Right ventricle myocardium superior (tissue), 1 donor: ENCODE measurements at regions of chr17 and their contacts with region 1.

Region 1: DNA sequence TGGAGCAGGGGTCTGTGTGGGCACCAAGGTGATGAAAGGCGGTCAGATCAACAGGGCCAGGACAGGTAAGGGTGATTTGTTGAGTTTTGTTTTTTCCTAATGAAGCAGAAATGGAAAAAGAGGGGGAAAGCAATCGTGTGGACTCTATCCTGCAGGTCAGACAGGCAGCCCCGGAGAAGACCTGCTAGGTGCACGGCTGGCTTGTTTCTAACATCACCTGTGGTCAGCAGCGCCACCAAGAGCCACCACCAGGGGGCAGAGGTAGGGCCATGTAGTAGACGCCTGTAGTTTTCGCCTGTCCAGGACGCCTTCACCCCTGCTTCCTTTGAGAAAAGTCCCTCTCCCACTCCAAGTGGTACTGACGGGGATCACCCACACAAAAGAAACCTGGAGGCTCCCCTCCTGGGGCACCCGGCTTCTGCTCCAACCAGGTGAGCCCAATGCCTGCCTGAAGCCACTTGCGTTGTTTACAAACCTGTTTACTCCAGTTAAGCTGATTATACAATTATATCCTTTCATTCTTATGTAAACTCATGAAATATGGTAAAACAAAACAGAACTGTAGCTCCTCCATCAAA is 54.2 kb upstream of the SEC14L1 start:
- DNase-seq: peak; percentile 94
- ATAC-seq: peak; percentile 72

Region 2: GRCh38 chr17:77247048-77247541 is 160.6 kb after region 1 on chr17:
- intact Hi-C with region 1: loop called (anchors 1 kb)
- DNase-seq: peak; percentile 93
- ATAC-seq: peak; percentile 97